GM10248 (cell line): ENCODE measurements at regions of chr1 and their contacts with region 1.

Region 1: DNA sequence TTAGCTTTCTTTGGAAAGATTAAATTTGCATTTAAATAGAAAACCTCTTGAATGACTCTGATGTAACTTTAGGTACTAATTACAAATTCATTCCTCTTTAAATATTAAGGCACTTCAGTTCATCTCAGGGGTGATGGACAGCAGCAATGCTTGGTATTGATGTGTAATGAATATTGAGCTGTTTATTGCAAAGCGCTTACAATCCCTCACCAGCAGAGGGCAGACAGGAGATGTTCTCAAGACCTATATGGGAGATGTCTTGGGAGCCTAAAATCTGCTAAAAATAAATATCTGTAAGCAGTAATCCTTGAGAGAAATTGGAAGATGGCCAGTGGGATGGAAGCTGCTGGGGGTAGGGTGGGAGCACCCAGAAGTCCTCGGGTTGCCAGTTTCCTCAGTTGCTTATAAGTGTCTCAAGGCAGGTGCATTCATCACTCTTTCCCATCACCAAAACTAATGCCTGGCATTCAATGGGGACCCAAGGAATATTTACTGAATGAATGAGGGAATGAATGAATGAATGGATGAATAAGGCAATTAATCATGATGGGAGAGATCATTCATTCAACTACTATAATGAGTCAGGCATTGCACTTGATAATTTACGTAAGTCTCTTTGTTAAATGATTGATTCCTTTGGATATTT is 2.3 kb downstream of the KLHDC8A start:
- DNase-seq: peak; percentile 60
- CTCF ChIP-seq: peak; percentile 87

Region 2: GRCh38 chr1:205335643-205336091 is 18.7 kb before region 1 on chr1:
- CTCF ChIA-PET with region 1: interaction called, 14 read pairs
- POLR2A ChIA-PET with region 1: no interaction called
- DNase-seq: peak; percentile 78
- CTCF ChIP-seq: peak; percentile 96

Region 3: GRCh38 chr1:205344066-205344928 is 10.1 kb before region 1 on chr1:
- CTCF ChIA-PET with region 1: interaction called, 11 read pairs
- POLR2A ChIA-PET with region 1: no interaction called
- DNase-seq: no peak
- CTCF ChIP-seq: no peak

Region 4: DNA sequence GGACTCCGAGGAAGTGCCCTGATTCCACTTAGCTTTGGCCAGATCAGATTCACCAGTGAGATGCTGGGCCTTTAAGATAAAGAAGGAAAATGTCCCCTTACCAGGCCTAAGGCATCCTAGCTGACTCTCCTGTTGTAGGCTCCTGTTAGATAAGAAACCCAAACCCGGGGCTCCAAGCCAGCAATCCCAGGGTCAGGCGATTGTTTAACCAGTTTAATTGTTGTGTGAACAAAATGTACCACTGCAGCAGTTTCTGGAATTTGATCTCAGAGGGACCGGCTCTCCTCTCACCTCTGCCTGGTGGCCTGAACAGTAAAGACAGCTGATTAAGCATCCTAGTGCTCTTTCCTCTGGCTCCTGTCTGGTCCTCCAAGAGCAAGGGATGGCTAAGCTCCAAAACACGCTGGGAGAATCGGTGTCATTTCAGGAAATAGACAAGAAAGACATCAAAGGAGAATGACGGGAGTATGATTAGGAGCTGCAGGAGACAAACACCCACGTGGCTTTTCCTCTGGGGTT is 11.6 kb after region 1 on chr1:
- CTCF ChIA-PET with region 1: interaction called, 21 read pairs
- POLR2A ChIA-PET with region 1: no interaction called
- DNase-seq: no peak
- CTCF ChIP-seq: no peak

Region 5: DNA sequence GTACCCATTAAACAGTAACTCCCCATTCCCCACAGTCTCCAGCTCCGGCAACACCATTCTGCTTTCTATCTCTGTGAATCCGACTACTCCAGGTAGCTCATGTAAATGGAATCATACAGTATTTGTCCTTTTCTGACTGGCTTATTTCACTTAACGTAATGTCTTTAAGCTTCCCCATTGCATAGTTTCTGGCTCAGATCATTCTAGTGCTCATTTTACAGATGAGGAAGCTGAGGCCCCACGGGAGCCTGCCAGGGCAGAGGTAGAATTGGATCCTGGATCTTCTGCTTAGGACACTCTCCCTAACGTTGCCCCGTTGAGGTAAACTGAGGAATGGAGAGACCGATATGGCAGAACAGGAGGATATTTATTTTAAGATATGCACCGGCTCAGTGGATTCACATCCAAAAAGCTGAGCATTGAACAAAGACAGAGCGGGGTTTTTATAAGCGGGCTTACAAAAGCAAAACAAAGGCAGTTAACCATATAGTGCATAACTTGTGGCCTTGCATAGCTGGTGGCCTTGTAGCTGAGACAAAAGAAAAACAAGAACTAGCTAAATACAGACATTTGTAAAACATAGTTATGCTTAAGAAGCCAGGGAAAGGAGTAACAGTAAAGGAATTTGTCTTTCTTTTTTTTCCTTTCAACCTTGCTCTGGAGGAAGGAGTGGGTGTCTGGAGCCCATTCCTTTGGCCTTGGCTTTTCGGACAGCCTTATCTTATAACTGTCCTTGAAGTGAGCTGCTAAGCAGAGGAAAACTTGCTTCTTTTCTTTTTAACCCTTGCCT is 17.7 kb after region 1 on chr1:
- CTCF ChIA-PET with region 1: interaction called, 21 read pairs
- POLR2A ChIA-PET with region 1: no interaction called
- DNase-seq: no peak
- CTCF ChIP-seq: no peak